ENCODE measurements at regions of chr4 and their contacts with region 1.

Region 1: GRCh38 chr4:86544310-86544966 is 49.7 kb upstream of the PTPN13 start:
- DNase-seq: no peak
- ATAC-seq: peak; percentile 89
- H3K4me3 ChIP-seq: no peak overlapping the region
- H3K27ac ChIP-seq: peak overlapping the region; percentile 35; the same call in 1 of the 2 replicates
- H3K4me1 ChIP-seq: peaks cover 12% of the 10 kb centered on the region
- H3K27me3 ChIP-seq: no peaks in the 10 kb centered on the region; a peak in 1 of 4 replicates
- CTCF ChIP-seq: no peak
- EP300 ChIP-seq: peak in 1 of 2 experiments; percentile 68; a peak in 1 of 4 replicates
- POLR2A ChIP-seq: no peak
- RAD21 ChIP-seq: no peak

Region 2: GRCh38 chr4:86530183-86530582 is 14.3 kb before region 1 on chr4:
- CTCF ChIA-PET with region 1: interaction called, 8 read pairs
- POLR2A ChIA-PET with region 1: interaction called, 11 read pairs
- RAD21 ChIA-PET with region 1: interaction called, 32 read pairs
- SMC1A ChIA-PET with region 1: interaction called, 23 read pairs
- in situ Hi-C with region 1: no loop called
- intact Hi-C with region 1: no loop called
- DNase-seq: no peak
- ATAC-seq: peak; percentile 87
- H3K4me3 ChIP-seq: no peak overlapping the region
- H3K27ac ChIP-seq: no peak overlapping the region
- H3K4me1 ChIP-seq: no peaks in the 10 kb centered on the region
- H3K27me3 ChIP-seq: no peaks in the 10 kb centered on the region; a peak in 1 of 4 replicates
- CTCF ChIP-seq: no peak
- EP300 ChIP-seq: peak in 1 of 2 experiments; percentile 29; a peak in 1 of 4 replicates
- POLR2A ChIP-seq: no peak
- RAD21 ChIP-seq: no peak

Region 3: DNA sequence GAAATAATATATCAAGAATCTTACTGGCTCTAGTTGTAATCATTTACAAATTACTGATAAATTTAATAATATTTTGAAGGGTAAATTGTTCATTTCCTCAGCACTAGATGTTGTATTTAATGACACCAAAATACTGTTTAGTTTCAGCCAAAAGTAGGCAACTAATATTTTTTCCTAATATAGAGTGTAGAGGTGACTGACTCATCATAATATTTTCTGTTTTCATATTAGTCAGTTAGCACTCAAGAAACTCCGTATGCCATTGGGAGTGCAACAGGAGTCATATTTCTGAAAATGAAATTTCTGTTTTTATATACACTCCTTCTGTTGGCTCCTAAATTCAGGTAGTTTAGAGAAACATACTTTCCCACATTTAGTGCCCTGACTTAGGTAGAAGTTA is 13.1 kb after region 1 on chr4:
- CTCF ChIA-PET with region 1: interaction called, 4 read pairs
- POLR2A ChIA-PET with region 1: interaction called, 5 read pairs
- RAD21 ChIA-PET with region 1: interaction called, 3 read pairs
- SMC1A ChIA-PET with region 1: interaction called, 13 read pairs
- in situ Hi-C with region 1: no loop called
- intact Hi-C with region 1: loop called (anchors 1 kb)
- DNase-seq: no peak
- ATAC-seq: peak; percentile 88
- H3K4me3 ChIP-seq: no peak overlapping the region
- H3K27ac ChIP-seq: peak overlapping the region; percentile 69; the same call in 1 of the 2 replicates
- H3K4me1 ChIP-seq: peaks cover 7% of the 10 kb centered on the region; the same call in 1 of the 2 replicates
- H3K27me3 ChIP-seq: no peaks in the 10 kb centered on the region; a peak in 1 of 4 replicates
- CTCF ChIP-seq: no peak
- EP300 ChIP-seq: no peak
- POLR2A ChIP-seq: no peak
- RAD21 ChIP-seq: no peak

Region 4: GRCh38 chr4:86564795-86565194 is 20.4 kb after region 1 on chr4:
- CTCF ChIA-PET with region 1: interaction called, 4 read pairs
- POLR2A ChIA-PET with region 1: interaction called, 3 read pairs
- RAD21 ChIA-PET with region 1: interaction called, 9 read pairs
- SMC1A ChIA-PET with region 1: interaction called, 10 read pairs
- in situ Hi-C with region 1: no loop called
- intact Hi-C with region 1: no loop called
- DNase-seq: no peak
- ATAC-seq: peak; percentile 52
- H3K4me3 ChIP-seq: no peak overlapping the region
- H3K27ac ChIP-seq: no peak overlapping the region
- H3K4me1 ChIP-seq: no peaks in the 10 kb centered on the region; the same call in 1 of the 2 replicates
- H3K27me3 ChIP-seq: no peaks in the 10 kb centered on the region
- CTCF ChIP-seq: peak in 1 of 3 experiments; percentile 50; a peak in 2 of 6 replicates
- EP300 ChIP-seq: no peak
- POLR2A ChIP-seq: no peak
- RAD21 ChIP-seq: peak; percentile 56; the same call in 1 of the 2 replicates

Region 5: DNA sequence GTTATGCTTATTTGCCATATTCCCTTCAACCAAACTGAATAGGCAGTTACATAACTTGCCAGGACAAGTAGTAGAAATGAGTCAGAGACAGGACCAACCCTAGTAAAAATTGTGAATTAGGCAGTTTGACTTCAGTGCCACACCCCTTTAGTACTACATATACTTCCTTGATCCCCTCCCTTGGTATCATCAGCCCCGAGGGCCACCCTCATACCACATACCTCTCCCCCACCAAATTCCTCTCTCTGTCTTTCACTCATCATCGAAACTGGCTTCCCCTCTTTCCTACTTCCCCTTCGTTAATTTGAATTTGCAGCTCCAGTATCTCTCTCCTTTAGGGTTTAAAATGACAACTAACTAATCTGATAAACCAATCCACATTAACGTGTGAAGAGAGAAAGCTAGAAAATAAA is 41.7 kb after region 1 on chr4:
- CTCF ChIA-PET with region 1: interaction called, 3 read pairs
- POLR2A ChIA-PET with region 1: interaction called, 3 read pairs
- RAD21 ChIA-PET with region 1: interaction called, 5 read pairs
- SMC1A ChIA-PET with region 1: interaction called, 13 read pairs
- in situ Hi-C with region 1: no loop called
- intact Hi-C with region 1: no loop called
- DNase-seq: no peak
- ATAC-seq: peak; percentile 76
- H3K4me3 ChIP-seq: no peak overlapping the region
- H3K27ac ChIP-seq: no peak overlapping the region
- H3K4me1 ChIP-seq: 0 out of 2 replicates have a peak, but pooled peaks cover 3% of the 10 kb centered on the region
- H3K27me3 ChIP-seq: no peaks in the 10 kb centered on the region
- CTCF ChIP-seq: no peak
- EP300 ChIP-seq: 0 out of 4 replicates have a peak, but pooled peaks of 1 of the 2 experiments have one; percentile 21
- POLR2A ChIP-seq: no peak
- RAD21 ChIP-seq: no peak

Region 6: GRCh38 chr4:86613734-86614133 is 69.3 kb after region 1 on chr4:
- CTCF ChIA-PET with region 1: no interaction called
- POLR2A ChIA-PET with region 1: no interaction called
- RAD21 ChIA-PET with region 1: no interaction called
- SMC1A ChIA-PET with region 1: no interaction called
- in situ Hi-C with region 1: no loop called
- intact Hi-C with region 1: no loop called
- DNase-seq: no peak
- ATAC-seq: no peak
- H3K4me3 ChIP-seq: no peak overlapping the region
- H3K27ac ChIP-seq: no peak overlapping the region
- H3K4me1 ChIP-seq: no peaks in the 10 kb centered on the region
- H3K27me3 ChIP-seq: 0 out of 4 replicates have a peak, but pooled peaks cover 0 to 2% of the 10 kb centered on the region in 2 experiments
- CTCF ChIP-seq: no peak
- EP300 ChIP-seq: no peak
- POLR2A ChIP-seq: no peak
- RAD21 ChIP-seq: no peak

Measured in GM12878 (cell line).